ENCODE measurements at regions of chr3 and their contacts with region 1.

Region 1: DNA sequence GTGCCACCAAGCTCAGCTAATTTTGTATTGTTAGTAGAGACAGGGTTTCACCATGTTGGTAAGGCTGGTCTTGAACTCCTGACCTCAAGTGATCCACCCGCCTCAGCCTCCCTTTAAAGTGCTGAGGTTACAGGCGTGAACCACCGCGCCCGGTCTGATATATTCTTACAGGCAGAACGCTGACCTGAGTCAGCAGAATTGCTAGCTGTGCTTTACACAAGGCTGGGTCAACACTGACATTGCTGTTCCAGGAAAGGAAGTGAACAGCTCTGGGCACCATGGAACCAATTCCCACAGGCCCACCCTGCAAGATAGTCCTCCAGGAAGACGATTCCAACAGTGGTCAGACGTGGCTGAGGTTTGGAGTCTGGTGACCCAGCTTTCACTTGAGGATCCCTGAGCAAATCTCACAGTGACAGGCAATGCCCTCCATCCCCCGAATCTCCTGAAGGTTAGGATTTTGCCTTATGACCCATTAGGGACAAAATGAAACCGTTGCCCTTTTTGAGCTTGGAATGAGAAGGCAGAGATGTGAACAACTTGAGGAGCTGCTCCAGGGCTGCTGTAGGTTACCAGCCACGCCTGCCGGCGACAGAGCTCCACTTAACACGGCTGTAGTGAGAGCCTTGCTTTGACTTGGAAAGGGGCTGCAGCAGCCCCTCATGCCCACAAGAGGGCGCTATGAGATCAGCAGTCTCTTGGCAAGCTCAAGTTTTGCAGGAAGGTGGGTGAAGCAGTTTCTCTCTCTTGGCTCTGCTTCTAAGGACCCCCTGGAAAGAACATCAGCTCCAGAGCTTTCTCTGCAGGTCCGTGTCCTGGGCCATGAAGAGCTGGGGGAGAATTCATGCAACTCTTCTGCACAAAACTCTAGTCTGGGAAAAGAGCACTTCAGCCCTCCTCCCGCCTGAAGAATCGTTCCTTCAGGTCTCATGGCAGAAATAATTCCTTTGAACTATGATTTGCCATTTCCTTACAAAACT is 74.1 kb downstream of the SENP2 start:
- DNase-seq: peak; percentile 57 to 86 (median 79)
- H3K4me3 ChIP-seq: peak overlapping the region in 23 of 59 donors; percentile 5 to 50 (median 22)
- H3K27ac ChIP-seq: peak overlapping the region in 12 of 59 donors; percentile 7 to 90 (median 39)
- H3K27me3 ChIP-seq: peaks cover 0 to 8% (median 0%) of the 10 kb centered on the region in 45 donors
- CTCF ChIP-seq: peak in 55 of 56 donors; percentile 87 to 99 (median 97)

Region 2: DNA sequence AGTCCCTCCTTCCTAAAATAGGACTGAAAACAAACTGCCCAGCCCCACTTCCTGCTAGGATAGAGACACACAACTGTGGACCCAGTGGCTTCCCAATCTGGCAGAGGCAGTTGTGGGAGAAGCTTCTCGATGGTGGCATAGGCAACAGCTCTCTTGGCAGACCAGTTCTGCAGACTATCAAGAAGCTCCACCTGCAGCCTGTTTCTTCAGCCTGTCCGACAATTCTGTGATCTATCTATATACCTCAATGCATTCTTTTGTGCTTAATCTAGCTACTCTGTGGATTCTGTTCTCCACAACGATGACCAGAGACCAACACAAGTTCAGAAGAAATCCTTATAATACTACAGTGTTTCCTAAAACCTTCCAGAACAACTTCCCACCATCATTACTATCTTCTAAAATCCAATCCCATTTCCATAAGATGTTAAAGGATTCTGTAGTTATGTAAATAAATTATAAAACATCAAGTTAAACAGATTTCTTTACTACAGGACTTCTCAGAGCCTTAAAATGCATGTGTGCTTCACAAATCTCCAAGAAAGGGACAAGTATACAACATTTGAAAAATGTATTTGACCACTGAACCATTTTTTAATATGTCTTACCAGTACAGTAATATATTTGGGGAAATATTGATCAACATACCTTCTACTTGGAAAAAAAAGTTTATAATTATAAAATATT is 106.9 kb after region 1 on chr3:
- intact Hi-C with region 1: loop called (anchors 5 kb)
- DNase-seq: no peak
- H3K4me3 ChIP-seq: no peak overlapping the region
- H3K27ac ChIP-seq: no peak overlapping the region
- H3K27me3 ChIP-seq: peaks cover 0 to 26% (median 0%) of the 10 kb centered on the region in 45 donors
- CTCF ChIP-seq: no peak

Region 3: DNA sequence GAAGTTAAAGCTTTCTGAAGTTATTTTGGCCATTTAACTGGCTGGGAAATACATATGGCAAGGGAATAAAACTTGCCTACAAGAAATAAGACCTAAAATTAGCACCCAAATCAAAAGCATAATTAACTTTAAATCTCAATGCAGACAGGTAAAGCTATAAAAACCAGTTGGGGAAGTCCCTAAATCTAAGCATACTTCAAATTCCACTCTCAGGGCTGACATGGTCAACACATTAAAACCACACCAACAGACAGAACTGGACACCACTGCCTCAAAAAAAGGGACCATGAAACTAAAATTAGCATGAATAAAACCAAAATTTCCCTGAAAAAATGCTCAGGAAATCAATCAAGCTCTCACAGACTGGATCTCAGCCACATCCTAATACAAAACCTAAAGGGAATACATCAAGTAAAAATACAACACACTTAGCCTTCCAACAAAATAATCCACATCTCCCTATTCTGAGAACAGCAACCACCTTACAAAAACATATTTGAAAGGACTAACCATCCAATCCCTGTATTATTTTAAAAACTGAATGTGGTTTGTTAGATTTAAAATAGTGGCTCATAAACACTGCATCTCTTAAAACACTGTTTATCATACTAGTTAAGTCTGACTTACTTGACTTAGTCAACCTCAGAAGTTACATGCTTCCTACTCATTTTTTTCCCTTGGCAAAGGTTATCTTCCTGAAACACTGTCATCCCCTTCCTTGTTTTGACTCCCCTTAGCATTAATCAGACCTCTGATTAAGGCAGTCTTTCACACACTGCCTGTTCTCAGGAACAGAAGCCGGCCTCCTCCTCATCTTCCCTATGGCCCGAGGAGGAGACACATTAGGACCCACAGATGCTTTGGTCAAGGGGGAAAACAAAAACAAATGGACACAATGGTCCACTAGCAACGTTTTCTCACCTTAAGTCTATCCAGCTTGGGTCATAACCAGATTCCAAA is 269.2 kb after region 1 on chr3:
- intact Hi-C with region 1: loop called in 1 of 2 experiments (anchors 10 kb)
- DNase-seq: no peak
- H3K4me3 ChIP-seq: peak overlapping the region in 45 of 59 donors; percentile 1 to 100 (median 15)
- H3K27ac ChIP-seq: peak overlapping the region in 4 of 59 donors; percentile 8 to 47 (median 23)
- H3K27me3 ChIP-seq: no peaks in the 10 kb centered on the region
- CTCF ChIP-seq: no peak

Region 4: DNA sequence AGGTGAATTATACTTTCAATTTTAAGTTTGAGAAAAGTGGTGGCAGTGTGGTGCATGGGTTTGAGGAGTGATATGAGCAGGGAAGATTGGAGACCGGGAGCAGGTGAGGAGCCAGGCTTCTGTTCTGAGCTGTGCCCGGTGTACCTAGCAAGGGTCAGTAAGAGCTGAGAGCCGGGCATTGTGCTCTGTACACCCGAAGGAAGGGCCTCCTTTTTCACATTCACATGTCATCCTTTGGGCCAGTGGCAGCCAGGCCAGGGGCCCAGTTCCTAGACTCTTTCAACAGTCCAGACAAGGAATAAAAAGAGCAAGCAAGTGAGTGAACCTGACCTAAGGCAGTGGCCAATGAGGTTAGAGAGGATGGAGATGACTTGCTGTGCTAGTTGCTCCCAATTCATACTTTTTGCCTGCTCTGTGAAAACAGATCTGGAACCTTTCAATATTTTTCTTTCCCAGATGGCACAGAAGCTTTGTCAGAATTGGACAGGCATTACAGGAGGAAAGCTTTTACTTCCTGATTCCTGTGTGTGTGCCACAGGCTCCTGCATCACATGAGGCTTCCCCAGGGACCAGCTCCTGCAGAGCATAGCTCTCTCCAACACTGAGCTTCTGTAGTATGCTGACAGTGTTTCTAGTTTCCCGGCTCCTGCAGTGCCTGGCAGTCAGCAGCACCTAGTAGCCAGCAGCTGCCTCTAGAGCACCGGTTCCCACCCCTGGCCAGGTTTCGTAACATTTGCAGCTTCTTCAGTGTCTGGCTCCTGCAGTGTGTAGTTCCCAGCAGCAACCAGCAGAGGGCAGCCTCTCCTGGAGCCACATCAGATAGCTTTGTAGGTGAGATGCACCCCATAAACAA is 282.9 kb after region 1 on chr3:
- intact Hi-C with region 1: loop called in 1 of 2 experiments (anchors 5 kb)
- DNase-seq: peak; percentile 74 to 92 (median 84)
- H3K4me3 ChIP-seq: peak overlapping the region in 26 of 59 donors; percentile 3 to 55 (median 28)
- H3K27ac ChIP-seq: peak overlapping the region in 49 of 59 donors; percentile 8 to 88 (median 65)
- H3K27me3 ChIP-seq: no peaks in the 10 kb centered on the region
- CTCF ChIP-seq: peak; percentile 83 to 99 (median 96)

Measured in dorsolateral prefrontal cortex (tissue), 120 donors.